Breast epithelium (tissue), 4 donors: ENCODE measurements at regions of chr1 and their contacts with region 1.

Region 1: GRCh38 chr1:192147696-192148095 is 10.6 kb upstream of the RGS18 start:
- DNase-seq: no peak
- H3K4me3 ChIP-seq: no peak overlapping the region
- H3K27ac ChIP-seq: no peak overlapping the region
- H3K4me1 ChIP-seq: no peaks in the 10 kb centered on the region
- H3K27me3 ChIP-seq: no peaks in the 10 kb centered on the region
- CTCF ChIP-seq: no peak
- POLR2A ChIP-seq: no peak

Region 2: GRCh38 chr1:191620883-191621282 is 526.8 kb before region 1 on chr1:
- intact Hi-C with region 1: no loop called
- DNase-seq: no peak
- H3K4me3 ChIP-seq: no peak overlapping the region
- H3K27ac ChIP-seq: no peak overlapping the region
- H3K4me1 ChIP-seq: no peaks in the 10 kb centered on the region
- H3K27me3 ChIP-seq: no peaks in the 10 kb centered on the region
- CTCF ChIP-seq: no peak
- POLR2A ChIP-seq: no peak

Region 3: DNA sequence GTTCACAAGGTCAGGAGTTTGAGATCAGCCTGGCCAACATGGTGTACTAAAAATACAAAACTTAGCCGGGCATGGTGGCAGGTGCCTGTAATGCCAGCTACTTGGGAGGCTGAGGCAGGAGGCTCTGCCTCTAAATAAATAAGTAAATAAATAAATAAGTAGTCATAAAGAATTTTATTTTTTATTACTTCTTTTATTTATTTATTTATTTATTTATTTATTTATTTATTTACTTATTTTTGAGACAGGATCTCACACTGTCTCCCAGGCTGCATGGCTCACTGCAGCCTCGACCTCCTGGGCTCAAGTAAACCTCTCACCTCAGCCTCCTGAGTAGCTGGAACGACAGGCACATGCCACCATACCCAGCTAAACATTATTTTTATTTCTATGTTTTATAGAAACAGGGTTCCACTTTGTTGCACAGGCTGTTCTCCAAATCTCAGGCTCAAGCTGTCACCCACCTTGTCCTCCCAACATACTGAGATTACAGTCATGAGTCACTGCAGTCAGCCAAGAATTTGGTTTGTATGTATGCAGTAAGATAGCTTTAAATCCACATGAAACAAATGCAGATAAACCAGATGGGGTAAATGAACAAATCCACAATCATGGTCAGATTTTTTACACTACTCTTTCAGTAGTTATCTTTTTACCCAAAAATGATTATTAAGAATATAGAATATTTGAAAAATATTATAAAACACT is 512.7 kb before region 1 on chr1:
- intact Hi-C with region 1: no loop called
- DNase-seq: no peak
- H3K4me3 ChIP-seq: no peak overlapping the region
- H3K27ac ChIP-seq: no peak overlapping the region
- H3K4me1 ChIP-seq: no peaks in the 10 kb centered on the region
- H3K27me3 ChIP-seq: no peaks in the 10 kb centered on the region
- CTCF ChIP-seq: no peak
- POLR2A ChIP-seq: no peak

Region 4: DNA sequence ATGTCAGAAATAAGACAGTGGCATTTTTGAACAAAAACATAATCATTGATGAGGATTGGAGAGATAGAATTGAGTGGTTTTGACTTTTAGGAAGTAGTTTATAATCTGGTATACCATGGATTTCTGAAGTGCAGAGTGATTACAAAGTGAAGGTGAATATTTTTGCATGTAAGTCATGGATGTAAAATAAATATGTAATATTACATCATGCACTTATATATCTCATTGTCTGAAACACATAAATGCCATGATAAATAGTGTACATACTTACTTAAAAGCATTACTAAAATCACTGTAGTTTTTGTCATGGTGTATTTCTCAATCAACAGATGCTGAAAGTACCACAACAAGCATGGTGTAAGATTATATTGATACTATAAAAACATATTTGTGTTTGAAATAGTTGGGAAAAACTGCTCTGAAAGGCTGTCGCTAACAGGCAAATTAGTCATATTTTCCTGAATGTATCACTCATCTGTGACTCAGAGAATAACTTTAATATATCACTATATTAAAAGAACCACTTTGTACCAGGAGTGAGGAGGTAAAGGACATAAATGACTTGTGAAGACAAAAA is 14.3 kb before region 1 on chr1:
- intact Hi-C with region 1: no loop called
- DNase-seq: no peak
- H3K4me3 ChIP-seq: no peak overlapping the region
- H3K27ac ChIP-seq: no peak overlapping the region
- H3K4me1 ChIP-seq: no peaks in the 10 kb centered on the region
- H3K27me3 ChIP-seq: no peaks in the 10 kb centered on the region
- CTCF ChIP-seq: no peak
- POLR2A ChIP-seq: no peak

Region 5: GRCh38 chr1:192521734-192522133 is 374.0 kb after region 1 on chr1:
- intact Hi-C with region 1: loop called (anchors 10 kb)
- DNase-seq: no peak
- H3K4me3 ChIP-seq: no peak overlapping the region
- H3K27ac ChIP-seq: no peak overlapping the region
- H3K4me1 ChIP-seq: no peaks in the 10 kb centered on the region
- H3K27me3 ChIP-seq: no peaks in the 10 kb centered on the region
- CTCF ChIP-seq: no peak
- POLR2A ChIP-seq: no peak

Region 6: GRCh38 chr1:193434319-193434718 is 1286.6 kb after region 1 on chr1:
- intact Hi-C with region 1: no loop called
- DNase-seq: no peak
- H3K4me3 ChIP-seq: no peak overlapping the region
- H3K27ac ChIP-seq: no peak overlapping the region
- H3K4me1 ChIP-seq: no peaks in the 10 kb centered on the region
- H3K27me3 ChIP-seq: no peaks in the 10 kb centered on the region
- CTCF ChIP-seq: no peak
- POLR2A ChIP-seq: no peak